PC-9 (cell line): ENCODE measurements at regions of chr22 and their contacts with region 1.

Region 1: DNA sequence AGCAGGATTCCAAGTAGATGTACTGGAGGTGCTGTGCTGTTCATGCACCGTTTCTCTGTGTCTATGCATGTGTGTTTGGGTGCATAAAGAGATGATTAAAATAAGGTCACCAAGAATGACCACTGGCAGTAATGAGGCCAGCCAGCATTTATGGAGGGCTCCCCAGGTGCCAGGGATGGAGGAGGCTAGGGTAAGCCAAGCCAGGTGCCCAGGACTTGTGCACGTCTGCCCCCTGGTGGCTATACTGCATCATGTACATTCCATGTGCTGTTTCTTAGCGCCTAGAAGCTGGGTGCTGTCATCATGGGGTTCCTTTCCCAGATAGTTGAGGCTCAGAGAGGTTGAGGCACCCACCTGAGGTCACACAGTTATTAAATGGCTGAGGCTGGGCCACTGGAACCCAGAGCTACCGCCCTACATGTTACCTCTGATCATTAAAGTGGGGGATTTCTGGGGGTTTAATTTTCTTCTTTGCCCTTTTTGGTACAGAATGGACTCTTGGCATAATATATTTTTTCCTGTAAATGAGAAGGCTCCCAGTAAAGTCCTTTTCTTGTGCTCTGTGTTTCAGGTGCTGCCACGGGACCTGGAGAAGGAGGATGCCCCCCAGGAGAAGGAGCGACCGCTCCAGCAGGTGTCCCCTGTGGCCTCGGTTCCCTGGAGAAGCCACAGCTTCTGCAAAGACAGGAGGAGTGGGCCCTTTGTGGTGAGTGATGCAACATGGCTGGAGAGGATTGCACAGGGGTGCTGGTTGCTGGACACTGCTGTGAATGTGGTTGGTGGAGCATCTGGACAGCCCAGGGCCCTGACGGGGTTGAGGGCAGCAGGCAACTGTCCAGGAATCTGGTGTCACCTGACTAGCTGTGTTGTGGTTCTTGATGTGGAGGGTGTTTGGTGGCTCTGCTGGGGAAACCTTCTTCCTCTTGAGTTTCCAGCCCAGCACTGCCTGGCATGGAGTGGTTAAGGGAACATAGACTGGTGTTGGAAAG is 96.4 kb downstream of the KIAA1671 start:
- DNase-seq: peak; percentile 48 to 50
- H3K4me3 ChIP-seq: no peak overlapping the region
- H3K27ac ChIP-seq: no peak overlapping the region
- H3K4me1 ChIP-seq: no peaks in the 10 kb centered on the region
- H3K27me3 ChIP-seq: no peaks in the 10 kb centered on the region
- CTCF ChIP-seq: peak; percentile 92

Region 2: GRCh38 chr22:24875862-24876506 is 173.0 kb before region 1 on chr22:
- CTCF ChIA-PET with region 1: no interaction called
- POLR2A ChIA-PET with region 1: no interaction called
- intact Hi-C with region 1: no loop called
- DNase-seq: peak in 1 of 2 experiments; percentile 6
- H3K4me3 ChIP-seq: no peak overlapping the region
- H3K27ac ChIP-seq: no peak overlapping the region
- H3K4me1 ChIP-seq: no peaks in the 10 kb centered on the region
- H3K27me3 ChIP-seq: peaks cover 41% of the 10 kb centered on the region
- CTCF ChIP-seq: no peak

Region 3: DNA sequence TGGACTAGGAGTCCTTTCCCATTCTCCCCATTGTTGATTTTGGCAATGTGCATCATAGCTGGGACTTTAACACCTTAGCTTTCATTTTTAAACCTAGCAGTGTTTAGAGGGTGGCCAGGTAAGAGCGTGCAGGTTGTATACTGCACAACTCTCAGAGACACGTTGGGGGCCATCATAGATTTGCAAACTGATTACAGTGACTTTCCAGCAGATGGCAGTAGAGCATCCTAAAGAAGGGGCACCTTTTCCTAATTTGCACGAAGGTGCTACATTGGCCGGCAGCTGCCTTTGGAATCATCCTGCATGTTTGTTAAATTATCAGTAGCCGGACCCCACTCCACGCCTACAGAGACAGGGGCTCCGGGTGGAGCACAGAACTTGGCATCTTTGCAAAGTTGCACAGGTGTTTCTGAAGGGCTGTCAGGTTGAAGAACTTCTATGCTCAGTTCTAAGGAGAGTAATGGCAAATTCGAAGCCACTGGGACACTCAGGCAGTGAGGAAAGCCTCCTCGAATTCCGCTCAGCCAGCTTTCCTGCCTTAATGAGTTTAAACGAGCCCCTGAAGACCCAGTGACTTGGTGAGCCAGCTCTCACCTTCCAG is 110.1 kb before region 1 on chr22:
- CTCF ChIA-PET with region 1: interaction called, 3 read pairs
- POLR2A ChIA-PET with region 1: no interaction called
- intact Hi-C with region 1: loop called (anchors 1 kb)
- DNase-seq: no peak
- H3K4me3 ChIP-seq: no peak overlapping the region
- H3K27ac ChIP-seq: no peak overlapping the region
- H3K4me1 ChIP-seq: no peaks in the 10 kb centered on the region
- H3K27me3 ChIP-seq: no peaks in the 10 kb centered on the region
- CTCF ChIP-seq: peak; percentile 85

Region 4: DNA sequence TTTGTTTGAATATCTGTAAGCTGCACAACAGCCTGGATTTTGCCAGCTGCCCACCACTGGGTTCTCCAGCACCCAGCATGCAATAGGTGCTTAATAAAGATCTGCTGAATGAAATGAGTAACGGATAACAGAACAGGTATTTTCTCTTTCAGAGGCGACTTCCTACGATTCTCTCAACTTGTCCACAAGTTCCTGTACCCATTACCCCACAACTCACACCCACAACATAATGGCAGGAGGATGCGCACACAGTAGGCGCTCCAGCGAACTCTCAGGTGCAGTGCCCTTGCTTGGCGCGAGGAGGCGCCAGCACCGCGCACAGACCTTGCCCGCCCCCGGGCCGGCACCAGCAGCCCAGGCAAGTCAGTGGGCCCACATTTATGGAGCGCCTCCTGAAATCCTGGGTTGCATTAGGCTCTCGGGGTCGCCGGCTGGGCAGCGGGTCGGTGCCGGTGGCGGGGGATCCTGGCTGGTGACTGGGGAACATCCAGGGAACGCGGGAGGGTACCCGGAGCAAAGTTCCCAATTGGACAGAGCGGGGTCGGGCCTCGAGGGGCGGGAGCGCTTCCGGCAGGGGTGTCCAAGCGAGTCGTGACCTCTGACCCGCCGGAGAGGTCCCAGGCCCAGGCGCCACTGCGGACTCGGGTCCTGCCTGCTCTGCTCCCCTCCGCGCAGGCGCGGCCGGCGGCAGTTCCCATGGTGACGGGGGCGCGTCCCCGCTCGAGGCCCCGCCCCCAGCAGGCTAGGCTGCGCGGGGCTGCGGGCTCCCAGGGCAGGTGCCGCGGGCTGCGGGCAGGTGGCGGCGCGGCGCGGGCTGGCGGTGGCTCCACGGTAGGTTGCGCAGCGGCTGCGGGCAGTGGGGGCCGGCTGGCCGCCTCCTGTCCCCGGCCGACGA is 96.8 kb before region 1 on chr22 and contains the start of gene KIAA1671:
- CTCF ChIA-PET with region 1: no interaction called
- POLR2A ChIA-PET with region 1: no interaction called
- intact Hi-C with region 1: loop called (anchors 2 kb)
- DNase-seq: peak; percentile 67 to 91
- H3K4me3 ChIP-seq: peak within 1 kb of the TSS; percentile 91
- H3K27ac ChIP-seq: peak within 1 kb of the TSS; percentile 87
- H3K4me1 ChIP-seq: peaks cover 16% of the 10 kb centered on the region
- H3K27me3 ChIP-seq: no peaks in the 10 kb centered on the region
- CTCF ChIP-seq: peak; percentile 99
- total RNA-seq, gene KIAA1671: 44.3 and 47.7 TPM in 2 replicates

Region 5: DNA sequence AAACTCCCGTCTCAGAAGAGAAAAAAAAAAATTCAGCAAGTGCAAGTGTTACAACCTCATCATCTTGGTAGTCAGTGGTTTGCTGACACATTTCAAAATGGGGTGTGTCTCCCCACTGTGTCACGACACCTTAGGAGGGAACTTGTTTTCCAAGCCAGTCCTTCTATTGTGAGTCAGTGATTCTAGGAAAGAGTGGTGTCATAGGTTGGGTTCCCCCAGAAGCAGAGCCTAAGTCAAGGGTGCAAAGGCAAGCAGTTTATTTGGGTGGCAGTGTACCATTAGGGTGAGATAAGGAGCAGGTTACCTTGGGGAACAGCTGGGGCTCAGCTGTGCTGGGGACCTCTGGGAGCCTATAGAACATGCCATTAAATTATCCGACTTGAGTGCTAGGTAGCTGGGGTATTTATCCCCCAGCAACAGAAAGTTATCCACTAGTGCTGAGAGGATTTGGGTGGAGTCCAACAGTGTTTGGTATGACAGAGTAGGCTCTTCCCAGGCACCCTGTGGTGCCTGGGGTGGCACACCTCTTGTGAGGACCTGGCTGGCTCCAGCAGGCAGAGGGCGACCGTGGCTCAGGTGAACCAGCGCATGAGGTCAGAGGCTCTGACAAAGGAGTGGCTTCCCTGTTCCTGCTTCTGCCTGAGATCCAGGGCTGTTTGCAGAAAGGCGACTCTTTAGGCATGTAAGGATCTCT is 54.7 kb before region 1 on chr22:
- CTCF ChIA-PET with region 1: no interaction called
- POLR2A ChIA-PET with region 1: no interaction called
- intact Hi-C with region 1: loop called (anchors 1 kb)
- DNase-seq: peak; percentile 75 to 97
- H3K4me3 ChIP-seq: no peak overlapping the region
- H3K27ac ChIP-seq: peak overlapping the region; percentile 96
- H3K4me1 ChIP-seq: peaks cover 75% of the 10 kb centered on the region
- H3K27me3 ChIP-seq: no peaks in the 10 kb centered on the region
- CTCF ChIP-seq: peak; percentile 65

Region 6: DNA sequence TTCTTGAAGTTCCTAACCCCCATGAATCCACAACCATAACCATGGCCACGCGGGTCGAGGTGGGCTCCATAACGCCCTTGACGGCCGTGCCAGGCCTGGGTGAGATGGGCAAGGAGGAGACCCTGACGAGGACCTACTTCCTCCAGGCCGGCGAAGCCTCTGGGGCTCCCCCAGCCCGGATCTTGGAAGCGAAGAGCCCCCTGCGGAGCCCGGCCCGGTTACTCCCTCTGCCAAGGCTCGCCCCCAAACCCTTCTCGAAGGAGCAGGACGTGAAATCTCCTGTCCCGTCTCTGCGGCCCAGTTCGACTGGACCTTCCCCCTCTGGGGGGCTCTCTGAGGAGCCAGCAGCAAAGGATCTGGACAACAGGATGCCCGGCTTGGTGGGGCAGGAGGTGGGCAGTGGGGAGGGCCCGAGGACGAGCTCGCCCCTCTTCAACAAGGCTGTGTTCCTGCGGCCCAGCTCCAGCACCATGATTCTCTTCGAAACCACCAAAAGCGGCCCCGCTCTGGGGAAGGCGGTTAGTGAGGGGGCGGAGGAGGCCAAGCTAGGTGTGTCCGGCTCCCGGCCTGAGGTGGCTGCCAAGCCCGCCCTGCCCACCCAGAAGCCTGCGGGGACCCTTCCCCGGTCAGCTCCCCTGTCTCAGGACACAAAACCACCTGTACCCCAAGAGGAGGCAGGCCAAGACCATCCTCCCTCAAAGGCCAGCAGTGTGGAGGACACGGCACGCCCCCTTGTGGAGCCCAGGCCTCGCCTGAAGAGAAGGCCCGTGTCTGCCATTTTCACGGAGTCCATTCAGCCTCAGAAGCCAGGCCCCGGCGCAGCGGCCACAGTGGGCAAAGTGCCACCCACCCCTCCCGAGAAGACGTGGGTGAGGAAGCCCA is 20.8 kb before region 1 on chr22:
- CTCF ChIA-PET with region 1: no interaction called
- POLR2A ChIA-PET with region 1: interaction called, 15 read pairs
- intact Hi-C with region 1: no loop called
- DNase-seq: no peak
- H3K4me3 ChIP-seq: no peak overlapping the region
- H3K27ac ChIP-seq: no peak overlapping the region
- H3K4me1 ChIP-seq: peaks cover 28% of the 10 kb centered on the region
- H3K27me3 ChIP-seq: no peaks in the 10 kb centered on the region
- CTCF ChIP-seq: peak; percentile 42

Region 7: GRCh38 chr22:25110846-25111578 is 62.1 kb after region 1 on chr22:
- CTCF ChIA-PET with region 1: no interaction called
- POLR2A ChIA-PET with region 1: no interaction called
- intact Hi-C with region 1: no loop called
- DNase-seq: peak; percentile 73 to 85
- H3K4me3 ChIP-seq: peak overlapping the region; percentile 78
- H3K27ac ChIP-seq: peak overlapping the region; percentile 9; the same call in 1 of the 2 replicates
- H3K4me1 ChIP-seq: peaks cover 5% of the 10 kb centered on the region
- H3K27me3 ChIP-seq: no peaks in the 10 kb centered on the region
- CTCF ChIP-seq: peak; percentile 74

Region 8: GRCh38 chr22:25172153-25172552 is 123.2 kb after region 1 on chr22:
- CTCF ChIA-PET with region 1: no interaction called
- POLR2A ChIA-PET with region 1: interaction called, 11 read pairs
- intact Hi-C with region 1: no loop called
- DNase-seq: peak in 1 of 2 experiments; percentile 12
- H3K4me3 ChIP-seq: no peak overlapping the region
- H3K27ac ChIP-seq: no peak overlapping the region
- H3K4me1 ChIP-seq: peaks cover 25% of the 10 kb centered on the region
- H3K27me3 ChIP-seq: no peaks in the 10 kb centered on the region
- CTCF ChIP-seq: peak; percentile 73